ENCODE measurements at regions of chr6 and their contacts with region 1.

Region 1: DNA sequence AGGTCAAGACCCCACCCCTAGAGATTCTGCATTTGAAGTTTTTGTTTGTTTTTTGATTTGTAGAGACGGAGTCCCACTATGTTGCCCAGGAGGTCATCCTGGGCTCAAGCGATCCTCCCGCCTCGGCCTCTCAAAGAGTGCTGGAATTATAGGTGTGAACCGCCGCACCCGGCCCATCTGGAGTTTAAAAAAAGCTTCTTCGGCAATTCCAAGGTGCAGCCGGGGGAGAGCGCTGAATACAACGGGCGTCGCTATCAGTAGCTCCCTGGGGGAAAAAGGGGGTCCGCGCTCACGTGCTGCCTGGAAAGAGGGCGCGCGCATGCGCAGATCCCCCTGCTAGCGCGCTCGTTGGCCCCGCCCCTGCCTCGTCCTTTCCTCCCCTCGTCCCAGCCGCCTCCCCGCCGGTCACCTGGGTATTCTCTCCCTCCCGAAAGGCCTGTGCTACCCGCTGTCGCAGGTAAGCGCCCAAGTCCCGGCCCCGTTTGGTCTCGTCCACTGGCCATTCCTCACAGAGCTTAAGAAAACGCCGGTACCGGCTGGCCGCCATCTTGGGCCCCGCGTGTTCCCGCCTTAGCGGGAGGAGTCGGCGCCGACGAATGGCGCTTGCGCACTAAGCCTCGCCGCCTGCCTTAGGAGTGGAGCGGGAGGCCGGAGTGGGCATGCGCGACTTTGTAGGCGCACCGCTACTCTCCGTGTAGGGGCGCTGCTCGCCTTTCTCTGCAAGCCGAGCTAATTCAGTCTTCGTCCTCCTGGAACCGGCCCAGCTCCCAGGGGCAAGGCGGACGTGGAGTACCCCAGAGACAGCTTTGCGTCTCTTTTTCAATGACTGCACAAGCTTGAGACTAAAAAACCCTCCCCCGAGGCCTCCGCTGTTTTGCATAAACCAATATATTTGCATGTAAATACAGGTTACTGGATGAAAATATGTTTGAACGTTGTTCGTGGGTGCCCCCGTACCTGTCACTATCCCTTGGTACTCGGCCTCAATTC is at the start of gene UQCC2:
- DNase-seq: peak; percentile 76
- H3K4me3 ChIP-seq: peak within 1 kb of the TSS; percentile 95
- H3K27me3 ChIP-seq: no peaks in the 10 kb centered on the region
- CTCF ChIP-seq: peak; percentile 81
- polyA plus RNA-seq, gene UQCC2: 51.7 and 66.5 TPM in 2 replicates

Region 2: DNA sequence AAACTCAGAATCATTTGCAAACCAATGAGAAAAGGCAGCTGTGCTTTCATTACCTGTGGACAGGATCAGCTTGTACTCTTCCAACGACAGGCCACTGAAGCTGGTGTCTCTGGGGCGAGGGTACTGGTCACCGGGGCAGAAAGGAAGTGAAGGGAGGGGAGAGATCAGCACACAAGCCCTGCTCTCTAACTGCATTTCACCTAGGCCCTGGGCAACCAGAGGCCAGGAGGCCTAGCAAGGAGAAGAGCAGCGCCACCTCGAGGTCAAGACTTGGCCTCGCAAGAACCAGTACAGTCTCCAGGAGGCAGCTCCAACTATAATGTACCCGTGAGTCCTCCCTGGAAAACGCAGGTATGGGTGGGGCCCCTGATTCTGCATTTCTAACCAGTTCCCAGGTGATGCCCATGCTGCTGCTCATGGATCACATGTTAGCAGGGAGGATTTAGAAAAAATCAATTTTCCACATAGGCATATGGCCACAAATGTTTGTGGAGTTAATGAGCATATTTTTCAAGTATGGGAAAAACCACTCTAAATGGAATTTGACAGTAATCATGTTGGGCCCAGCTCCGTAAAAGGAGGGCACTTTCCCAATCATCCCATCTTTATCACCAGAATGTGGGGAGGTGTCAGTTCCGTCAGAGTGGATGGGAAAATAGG is 10.9 kb before region 1 on chr6:
- CTCF ChIA-PET with region 1: interaction called, 37 read pairs
- POLR2A ChIA-PET with region 1: no interaction called
- DNase-seq: no peak
- H3K4me3 ChIP-seq: no peak overlapping the region
- H3K27me3 ChIP-seq: no peaks in the 10 kb centered on the region
- CTCF ChIP-seq: peak; percentile 88

Region 3: DNA sequence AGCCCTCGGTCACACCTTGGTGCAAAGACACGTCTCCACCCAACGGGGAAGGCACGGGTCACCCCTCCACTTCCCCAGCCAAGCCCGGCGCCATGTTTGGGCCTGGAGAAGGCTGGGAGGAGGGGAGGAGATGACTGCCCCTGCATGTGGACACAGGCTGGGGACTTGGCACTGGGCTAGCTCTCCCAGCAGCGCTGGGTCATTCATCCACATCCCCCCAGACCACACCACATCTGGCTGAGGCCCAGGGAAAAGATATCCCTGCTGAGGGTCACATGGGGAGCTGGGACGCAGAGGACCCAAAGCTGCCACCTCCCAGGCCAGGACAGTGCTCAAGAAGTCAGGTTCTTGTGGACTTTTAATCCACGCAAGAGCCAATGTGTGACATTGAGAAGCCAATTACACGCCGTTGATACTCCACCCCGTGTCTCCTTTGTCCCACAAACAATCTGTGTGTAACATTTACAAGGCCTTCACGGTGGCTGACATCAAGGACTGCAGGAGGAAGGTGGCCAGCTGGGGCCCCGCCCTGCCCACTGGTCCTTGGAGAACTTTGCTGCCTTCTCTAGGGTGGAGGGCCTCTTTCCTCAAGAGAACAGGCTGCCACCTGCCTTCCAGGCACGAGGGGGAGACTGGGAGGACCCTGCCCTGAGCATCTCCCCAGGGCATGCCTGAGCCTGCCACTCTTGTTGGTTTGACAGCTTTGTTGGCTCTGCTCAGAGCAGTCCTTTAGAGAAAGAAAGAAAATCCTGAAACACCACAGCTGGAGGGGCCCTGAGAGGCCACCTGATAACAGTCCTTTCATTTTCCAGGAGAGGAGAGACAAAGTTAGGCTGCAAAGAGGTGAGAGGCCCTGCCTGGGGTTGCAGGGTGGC is 40.6 kb after region 1 on chr6:
- CTCF ChIA-PET with region 1: interaction called, 78 read pairs
- POLR2A ChIA-PET with region 1: no interaction called
- DNase-seq: no peak
- H3K4me3 ChIP-seq: no peak overlapping the region
- H3K27me3 ChIP-seq: no peaks in the 10 kb centered on the region
- CTCF ChIP-seq: no peak

Region 4: DNA sequence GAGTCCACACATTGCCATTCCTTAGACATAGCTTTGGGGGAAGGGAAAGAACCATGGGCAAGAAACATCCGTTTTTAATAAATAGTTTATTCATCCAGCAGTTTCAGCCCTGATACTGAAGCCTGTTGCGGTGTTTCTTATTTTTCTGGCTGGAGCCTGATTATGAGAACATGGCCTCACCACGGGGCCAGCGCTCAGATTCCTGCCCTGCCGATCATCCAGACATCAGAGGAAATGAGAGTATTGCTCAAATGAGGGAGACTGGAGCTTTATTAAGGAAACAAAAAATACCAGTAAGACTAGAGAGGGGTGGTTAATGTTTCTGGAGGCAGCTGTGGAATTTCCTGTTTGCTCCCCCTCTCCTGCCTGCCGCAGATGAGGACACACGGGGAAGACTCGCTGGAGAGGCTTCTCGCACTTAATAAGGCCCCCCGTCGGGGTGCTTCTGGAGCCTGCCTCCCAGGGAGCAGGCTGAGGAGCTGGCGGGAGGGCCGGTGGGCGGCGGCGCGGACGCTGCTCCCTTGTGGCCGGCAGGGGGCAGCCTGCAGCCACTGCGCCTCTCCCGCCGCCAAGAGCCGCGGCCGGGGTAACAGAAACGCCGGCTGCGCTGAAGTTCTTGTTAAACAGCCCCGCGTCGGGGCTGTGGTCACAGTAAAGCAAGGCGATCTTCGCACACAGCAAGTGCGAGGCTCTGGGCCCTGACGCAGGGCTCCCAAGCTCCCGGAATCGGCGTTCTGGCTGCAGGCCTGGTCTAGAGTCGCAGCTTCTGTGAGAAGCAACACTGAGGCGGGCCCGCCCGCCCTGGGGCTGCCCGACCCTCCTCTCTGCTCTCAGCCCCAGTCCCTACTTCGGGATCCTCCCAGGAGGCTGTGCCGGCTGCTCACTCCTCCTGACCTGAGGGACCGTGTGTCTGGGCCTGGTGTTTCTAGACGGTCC is 60.0 kb after region 1 on chr6:
- CTCF ChIA-PET with region 1: interaction called, 13 read pairs
- POLR2A ChIA-PET with region 1: no interaction called
- DNase-seq: peak; percentile 96
- H3K4me3 ChIP-seq: no peak overlapping the region
- H3K27me3 ChIP-seq: no peaks in the 10 kb centered on the region
- CTCF ChIP-seq: peak; percentile 75

Region 5: GRCh38 chr6:34154668-34155447 is 443.4 kb after region 1 on chr6:
- CTCF ChIA-PET with region 1: interaction called, 30 read pairs
- POLR2A ChIA-PET with region 1: no interaction called
- DNase-seq: no peak
- H3K4me3 ChIP-seq: peak overlapping the region; percentile 20; the same call in 1 of the 2 replicates
- H3K27me3 ChIP-seq: peaks cover 31% of the 10 kb centered on the region
- CTCF ChIP-seq: peak; percentile 73

Region 6: DNA sequence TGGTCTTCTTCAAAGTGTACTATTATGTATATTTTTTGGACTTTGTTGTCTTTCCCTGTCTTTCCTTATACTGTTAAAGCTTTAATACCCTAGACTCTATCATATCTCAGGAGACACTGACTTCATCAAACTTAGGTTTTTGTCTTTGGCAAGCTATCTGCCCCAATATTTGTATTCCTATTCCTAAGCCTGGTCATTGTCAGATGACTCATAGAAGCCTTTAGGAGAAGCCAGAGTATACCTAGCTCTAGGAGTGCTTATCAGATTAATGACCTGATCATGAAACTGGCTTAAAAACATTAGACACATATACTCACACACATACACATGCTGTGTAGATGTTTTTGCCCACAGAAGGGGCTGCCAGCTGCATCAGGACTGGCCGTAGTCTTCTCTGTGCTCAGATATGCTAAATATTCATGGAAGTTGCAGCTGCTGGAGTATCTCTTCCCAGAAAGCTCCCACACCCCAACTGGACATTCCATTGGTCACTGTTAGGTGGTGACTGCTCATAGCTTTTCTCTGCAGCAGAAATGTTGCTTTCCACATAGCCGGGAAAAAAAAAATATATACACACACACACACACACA is 1279.6 kb after region 1 on chr6:
- CTCF ChIA-PET with region 1: no interaction called
- POLR2A ChIA-PET with region 1: no interaction called
- DNase-seq: no peak
- H3K4me3 ChIP-seq: no peak overlapping the region
- H3K27me3 ChIP-seq: no peaks in the 10 kb centered on the region
- CTCF ChIP-seq: no peak